Activated CD4-positive, alpha-beta T cell treated with anti-CD3 and anti-CD28 coated beads, Interleukin-2, amount 10 ng/mL, durations not matched to agents 24 days and 14 days (primary cell): ENCODE measurements at regions of chr1 and their contacts with region 1.

Region 1: DNA sequence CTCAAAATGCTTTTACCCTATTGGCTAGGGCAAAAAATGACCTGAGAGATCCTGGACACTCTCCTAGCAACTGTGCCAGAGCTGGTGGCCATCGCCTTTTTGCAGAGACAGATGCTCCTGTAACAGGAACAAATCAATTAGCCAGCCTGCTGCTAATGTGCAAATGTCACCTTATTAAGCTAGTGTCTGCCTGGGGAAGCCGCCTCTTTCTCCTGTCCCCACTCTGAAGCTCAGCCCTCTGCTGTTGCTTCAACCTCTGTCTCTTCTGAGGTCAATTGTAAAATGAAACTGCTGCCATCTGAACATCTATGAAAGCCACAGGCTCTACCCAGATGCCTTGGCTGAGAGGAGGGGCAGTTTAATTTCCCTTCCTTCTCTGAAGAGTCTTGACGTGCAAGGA is 85.5 kb upstream of the CACNA1E start:
- DNase-seq: peak; percentile 81
- H3K4me3 Mint-ChIP-seq: peak overlapping the region; percentile 63
- H3K27ac Mint-ChIP-seq: peak overlapping the region; percentile 87
- H3K4me1 Mint-ChIP-seq: peaks cover 39% of the 10 kb centered on the region
- H3K27me3 Mint-ChIP-seq: no peaks in the 10 kb centered on the region

Region 2: GRCh38 chr1:180502360-180503273 is 895.2 kb before region 1 on chr1 and contains the start of gene ACBD6:
- intact Hi-C with region 1: loop called (anchors 10 kb)
- DNase-seq: peak; percentile 96
- H3K4me3 Mint-ChIP-seq: peak within 1 kb of the TSS; percentile 97
- H3K27ac Mint-ChIP-seq: peak within 1 kb of the TSS; percentile 97
- H3K4me1 Mint-ChIP-seq: peaks cover 20% of the 10 kb centered on the region
- H3K27me3 Mint-ChIP-seq: peaks cover 5% of the 10 kb centered on the region
- total RNA-seq, gene ACBD6: 49.8 and 54.7 TPM in 2 replicates

Region 3: DNA sequence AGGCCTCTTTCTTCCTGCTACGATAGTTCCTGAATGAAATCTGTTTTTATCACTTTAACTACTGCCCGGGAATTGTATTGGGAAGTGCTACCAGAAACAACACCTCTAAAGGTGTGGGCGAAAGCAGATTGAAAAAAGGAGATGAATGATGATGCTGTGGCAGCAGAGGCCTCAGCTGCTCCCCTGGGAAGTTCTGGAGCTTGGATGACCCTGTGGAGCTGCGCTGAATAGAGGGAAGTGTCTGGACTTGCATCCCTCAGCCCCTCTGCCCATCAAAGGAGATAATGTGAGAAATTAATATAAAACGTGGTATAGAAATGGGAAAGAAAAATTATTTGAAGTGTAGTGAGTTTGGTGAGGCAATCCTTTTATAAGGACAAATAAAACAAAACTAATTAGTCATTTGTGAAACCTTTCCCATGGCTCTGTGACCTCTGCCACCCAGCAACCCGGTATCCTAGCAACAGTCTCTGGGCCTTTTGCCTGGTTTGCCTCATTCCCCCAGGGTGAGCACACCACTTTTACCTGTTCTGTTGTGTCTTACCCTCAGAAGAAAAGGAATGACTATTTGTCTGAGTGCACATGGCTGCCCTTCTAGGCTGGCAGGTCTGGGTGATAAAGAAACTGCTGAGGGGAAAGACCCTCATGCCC is 817.8 kb before region 1 on chr1:
- intact Hi-C with region 1: loop called (anchors 10 kb)
- DNase-seq: no peak
- H3K4me3 Mint-ChIP-seq: no peak overlapping the region
- H3K27ac Mint-ChIP-seq: no peak overlapping the region
- H3K4me1 Mint-ChIP-seq: peaks cover 7% of the 10 kb centered on the region
- H3K27me3 Mint-ChIP-seq: peaks cover 4% of the 10 kb centered on the region

Region 4: DNA sequence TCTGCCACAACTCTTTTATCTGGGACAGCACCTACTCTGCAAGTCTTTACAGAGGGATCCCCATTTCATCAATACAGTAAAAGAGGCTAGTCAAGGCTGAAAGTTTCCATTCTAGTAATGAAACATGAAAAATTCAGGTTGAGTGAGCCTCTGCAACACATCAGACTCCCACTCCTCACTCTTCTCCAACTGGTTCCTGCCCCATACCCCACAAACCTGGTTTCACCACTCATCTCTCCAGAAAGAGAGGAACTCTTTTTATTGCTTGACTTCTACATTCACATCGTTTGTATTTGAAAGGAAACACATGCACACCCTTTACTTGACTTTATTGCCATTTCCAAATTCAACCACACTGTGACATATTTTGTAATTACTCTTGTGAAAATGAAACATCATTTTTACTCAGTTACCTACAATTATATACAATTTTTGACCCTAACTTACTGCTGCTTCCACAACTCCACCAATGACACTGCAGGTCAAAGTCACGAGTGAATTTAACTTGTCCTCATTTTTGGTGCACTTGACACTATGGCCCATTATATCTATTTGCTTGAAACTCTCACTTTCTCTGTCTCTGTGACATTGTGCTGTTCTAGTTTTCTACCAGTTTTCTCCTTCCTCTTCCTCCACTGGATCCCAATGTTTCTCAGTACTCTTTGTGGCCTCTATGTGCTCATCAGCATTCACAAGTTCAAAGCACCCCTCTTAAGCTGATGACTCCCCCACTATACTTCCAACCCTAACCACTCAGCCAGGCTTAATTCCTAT is 383.2 kb before region 1 on chr1:
- intact Hi-C with region 1: loop called (anchors 2 kb)
- DNase-seq: no peak
- H3K4me3 Mint-ChIP-seq: no peak overlapping the region
- H3K27ac Mint-ChIP-seq: no peak overlapping the region
- H3K4me1 Mint-ChIP-seq: peaks cover 25% of the 10 kb centered on the region
- H3K27me3 Mint-ChIP-seq: no peaks in the 10 kb centered on the region

Region 5: DNA sequence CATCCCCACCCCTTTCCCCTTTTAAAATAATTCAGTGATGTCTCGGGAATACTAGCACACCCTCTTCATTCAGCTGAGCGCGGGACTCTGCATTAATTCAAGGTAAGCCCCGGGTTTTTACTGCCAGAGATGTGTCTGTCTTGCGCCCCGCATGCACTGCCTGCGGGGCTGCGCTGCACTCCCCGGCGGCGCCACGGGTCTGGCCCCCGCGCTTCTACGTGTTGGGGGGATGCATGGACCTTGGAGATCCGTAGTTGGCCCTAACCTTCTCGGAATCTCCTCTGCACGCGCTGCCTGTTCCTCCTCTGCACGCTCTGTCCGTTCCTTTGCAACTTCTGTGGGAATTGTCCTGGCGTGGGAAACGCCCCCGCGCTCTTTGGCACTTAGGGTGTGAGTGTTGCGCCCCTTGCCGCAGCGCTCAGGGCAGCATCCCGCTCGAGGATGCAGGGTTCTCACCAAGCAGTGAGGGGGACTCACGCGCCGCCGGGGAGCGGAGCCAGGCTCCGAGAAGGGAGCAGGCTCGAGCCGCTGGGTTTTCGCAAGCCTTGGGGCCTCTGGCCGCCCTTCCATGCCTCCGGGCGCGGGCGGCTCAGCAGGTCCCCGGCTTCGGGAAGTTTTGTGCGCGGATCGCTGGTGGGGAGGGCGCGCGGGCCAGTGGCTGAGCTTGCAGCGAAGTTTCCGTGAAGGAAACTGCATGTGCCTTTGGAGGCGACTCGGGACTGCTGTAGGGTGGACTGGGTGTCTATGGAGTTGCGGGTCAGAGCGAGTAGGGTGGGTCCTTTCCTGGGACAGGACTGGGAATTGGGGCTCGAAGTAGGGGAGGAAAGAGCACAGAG is 79.6 kb before region 1 on chr1:
- intact Hi-C with region 1: loop called (anchors 5 kb)
- DNase-seq: no peak
- H3K4me3 Mint-ChIP-seq: peak overlapping the region; percentile 62
- H3K27ac Mint-ChIP-seq: peak overlapping the region; percentile 7
- H3K4me1 Mint-ChIP-seq: peaks cover 22% of the 10 kb centered on the region
- H3K27me3 Mint-ChIP-seq: peaks cover 69% of the 10 kb centered on the region

Region 6: GRCh38 chr1:182029379-182030331 is 631.8 kb after region 1 on chr1:
- intact Hi-C with region 1: loop called (anchors 5 kb)
- DNase-seq: peak; percentile 99
- H3K4me3 Mint-ChIP-seq: peak overlapping the region; percentile 99
- H3K27ac Mint-ChIP-seq: peak overlapping the region; percentile 99
- H3K4me1 Mint-ChIP-seq: peaks cover 14% of the 10 kb centered on the region
- H3K27me3 Mint-ChIP-seq: no peaks in the 10 kb centered on the region